Pancreas (tissue), 10 donors: ENCODE measurements at regions of chr2 and their contacts with region 1.

Region 1: DNA sequence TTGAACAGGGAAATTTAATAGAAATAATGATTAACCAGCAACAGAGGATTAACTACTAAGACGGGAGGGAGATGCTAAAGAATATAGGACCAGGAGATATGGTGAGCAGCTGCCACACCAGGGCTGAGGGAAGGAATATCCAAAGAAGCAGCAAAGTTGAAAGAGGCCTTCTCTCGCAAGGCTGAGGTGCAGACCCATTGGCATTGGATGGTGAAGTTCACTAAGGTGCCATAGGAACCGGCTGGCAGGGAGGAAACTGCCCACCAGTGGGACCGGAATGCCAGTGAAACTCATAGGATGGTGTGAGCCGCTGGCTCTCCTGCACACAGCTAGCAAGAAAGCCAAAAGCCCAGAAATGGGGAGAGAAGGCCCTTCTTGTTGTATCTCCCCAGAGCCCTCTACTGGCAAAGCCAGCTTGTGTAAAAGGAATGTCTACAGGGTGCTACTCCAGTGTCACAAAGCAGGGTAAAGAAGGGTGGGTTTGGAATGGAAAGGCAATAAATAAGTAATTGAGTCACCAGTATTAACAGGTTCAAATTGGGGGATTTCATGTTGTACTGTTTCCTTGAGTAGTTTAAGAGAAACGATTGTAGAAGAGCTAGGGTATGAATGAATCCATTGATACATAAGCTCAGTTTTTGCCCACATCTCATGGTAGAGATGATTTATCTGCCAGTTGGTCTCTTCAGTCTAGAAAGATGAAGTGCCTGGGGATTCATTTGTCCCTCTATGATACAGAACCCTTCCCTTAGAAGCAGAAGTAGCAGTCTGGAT is 36.0 kb downstream of the FARP2 start:
- DNase-seq: peak in 3 of 6 donors; percentile 26 to 66 (median 53)
- ATAC-seq: peak; percentile 83 to 98 (median 94)
- H3K4me3 ChIP-seq: no peak overlapping the region
- H3K27ac ChIP-seq: no peak overlapping the region
- H3K4me1 ChIP-seq: peaks cover 0 to 10% (median 8%) of the 10 kb centered on the region in 3 donors
- H3K27me3 ChIP-seq: no peaks in the 10 kb centered on the region
- CTCF ChIP-seq: peak in 3 of 4 donors; percentile 28 to 38 (median 32)

Region 2: DNA sequence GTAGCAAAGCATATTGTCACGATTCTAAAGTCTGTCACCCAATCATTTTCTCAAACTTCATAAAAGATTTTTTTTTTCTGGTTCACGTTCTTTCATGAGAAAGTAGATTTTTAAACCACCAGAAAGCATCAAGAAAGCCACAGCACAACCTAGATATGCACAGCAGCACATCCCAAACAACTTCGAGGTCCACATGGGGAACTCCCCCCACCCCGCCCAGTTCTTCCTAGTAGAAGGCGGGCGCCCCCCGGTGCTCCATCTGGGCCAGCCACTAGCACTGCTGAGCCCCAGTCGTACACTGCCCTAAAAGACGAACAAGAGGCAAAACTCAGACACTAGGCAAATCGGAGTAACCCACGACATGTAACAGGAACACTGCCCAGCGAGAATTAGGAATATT is 92.1 kb before region 1 on chr2:
- intact Hi-C with region 1: no loop called
- DNase-seq: no peak
- ATAC-seq: no peak
- H3K4me3 ChIP-seq: no peak overlapping the region
- H3K27ac ChIP-seq: no peak overlapping the region
- H3K4me1 ChIP-seq: peaks cover 24 to 33% (median 32%) of the 10 kb centered on the region in 3 donors
- H3K27me3 ChIP-seq: no peaks in the 10 kb centered on the region
- CTCF ChIP-seq: no peak

Region 3: GRCh38 chr2:241355983-241356870 is 35.9 kb before region 1 on chr2 and contains the start of gene FARP2:
- intact Hi-C with region 1: loop called in 1 of 3 experiments (anchors 5 kb)
- DNase-seq: peak; percentile 98 to 100 (median 100)
- ATAC-seq: peak; percentile 82 to 90 (median 86)
- H3K4me3 ChIP-seq: peak within 1 kb of the TSS; percentile 69 to 84 (median 82)
- H3K27ac ChIP-seq: peak within 1 kb of the TSS; percentile 77 to 86 (median 82)
- H3K4me1 ChIP-seq: peaks cover 13 to 37% (median 34%) of the 10 kb centered on the region in 3 donors
- H3K27me3 ChIP-seq: no peaks in the 10 kb centered on the region
- CTCF ChIP-seq: no peak
- total RNA-seq, gene FARP2: 16.9 to 44.9 (median 24.2) TPM

Region 4: GRCh38 chr2:241489733-241490680 is 97.9 kb after region 1 on chr2:
- intact Hi-C with region 1: no loop called
- DNase-seq: no peak
- ATAC-seq: peak in 2 of 4 donors; percentile 3 to 7
- H3K4me3 ChIP-seq: no peak overlapping the region
- H3K27ac ChIP-seq: no peak overlapping the region
- H3K4me1 ChIP-seq: no peaks in the 10 kb centered on the region
- H3K27me3 ChIP-seq: no peaks in the 10 kb centered on the region
- CTCF ChIP-seq: no peak

Region 5: GRCh38 chr2:241975890-241976695 is 584.0 kb after region 1 on chr2:
- intact Hi-C with region 1: no loop called
- DNase-seq: no peak
- ATAC-seq: no peak
- H3K4me3 ChIP-seq: no peak overlapping the region
- H3K27ac ChIP-seq: no peak overlapping the region
- H3K4me1 ChIP-seq: no peaks in the 10 kb centered on the region
- H3K27me3 ChIP-seq: no peaks in the 10 kb centered on the region
- CTCF ChIP-seq: no peak